ENCODE measurements at regions of chr10 and their contacts with region 1.

Region 1: GRCh38 chr10:8946451-8946850 is 892.0 kb downstream of the GATA3 start:
- DNase-seq: no peak
- H3K4me3 Mint-ChIP-seq: no peak overlapping the region
- H3K27ac Mint-ChIP-seq: no peak overlapping the region
- H3K4me1 Mint-ChIP-seq: no peaks in the 10 kb centered on the region
- H3K27me3 Mint-ChIP-seq: no peaks in the 10 kb centered on the region
- CTCF ChIP-seq: no peak

Region 2: DNA sequence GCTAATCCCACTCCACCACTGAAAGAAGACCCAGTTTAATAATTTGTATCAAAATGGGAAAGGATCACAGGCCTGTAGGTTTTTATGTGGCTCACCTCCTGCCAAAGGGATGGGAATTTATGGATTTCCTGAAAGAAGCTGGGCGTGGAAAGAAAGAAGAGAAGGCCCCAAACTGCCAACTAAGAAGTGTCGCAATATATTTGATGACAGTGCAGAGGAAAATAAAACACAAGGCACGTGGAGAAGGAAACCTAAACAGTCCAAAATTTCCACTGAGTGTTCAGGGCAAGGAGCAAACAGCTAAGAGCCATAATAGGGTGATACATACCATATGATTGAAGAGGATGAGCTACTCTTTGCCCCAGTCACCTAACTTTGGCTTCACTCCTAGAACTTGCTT is 224.8 kb before region 1 on chr10:
- CTCF ChIA-PET with region 1: no interaction called
- POLR2A ChIA-PET with region 1: no interaction called
- intact Hi-C with region 1: no loop called
- DNase-seq: peak; percentile 71
- H3K4me3 Mint-ChIP-seq: no peak overlapping the region
- H3K27ac Mint-ChIP-seq: peak overlapping the region; percentile 78
- H3K4me1 Mint-ChIP-seq: peaks cover 12% of the 10 kb centered on the region
- H3K27me3 Mint-ChIP-seq: no peaks in the 10 kb centered on the region
- CTCF ChIP-seq: no peak

Region 3: DNA sequence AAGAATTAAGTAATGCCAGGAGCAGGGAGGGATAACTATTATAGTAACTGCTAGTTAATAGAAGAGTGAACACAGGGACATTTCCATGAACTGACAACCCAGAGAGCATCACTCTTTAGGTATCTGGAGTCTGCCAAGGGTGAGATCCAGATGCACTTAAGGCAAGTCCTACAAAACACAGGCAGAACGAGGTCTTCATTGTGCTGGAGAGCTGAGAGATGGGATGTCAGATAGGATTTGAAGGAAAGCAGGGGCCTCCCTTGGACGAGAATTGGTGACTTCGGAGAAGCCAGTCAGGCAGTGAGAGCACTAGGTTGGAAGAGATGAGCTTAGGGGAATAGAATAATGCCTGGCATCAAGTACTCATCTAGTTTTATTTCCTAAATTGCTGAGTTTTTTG is 207.5 kb before region 1 on chr10:
- CTCF ChIA-PET with region 1: no interaction called
- POLR2A ChIA-PET with region 1: no interaction called
- intact Hi-C with region 1: no loop called
- DNase-seq: no peak
- H3K4me3 Mint-ChIP-seq: no peak overlapping the region
- H3K27ac Mint-ChIP-seq: no peak overlapping the region
- H3K4me1 Mint-ChIP-seq: no peaks in the 10 kb centered on the region
- H3K27me3 Mint-ChIP-seq: no peaks in the 10 kb centered on the region
- CTCF ChIP-seq: no peak

Region 4: GRCh38 chr10:8985651-8986050 is 39.2 kb after region 1 on chr10:
- CTCF ChIA-PET with region 1: no interaction called
- POLR2A ChIA-PET with region 1: no interaction called
- intact Hi-C with region 1: loop called (anchors 1 kb)
- DNase-seq: no peak
- H3K4me3 Mint-ChIP-seq: no peak overlapping the region
- H3K27ac Mint-ChIP-seq: no peak overlapping the region
- H3K4me1 Mint-ChIP-seq: no peaks in the 10 kb centered on the region
- H3K27me3 Mint-ChIP-seq: no peaks in the 10 kb centered on the region
- CTCF ChIP-seq: no peak

Region 5: DNA sequence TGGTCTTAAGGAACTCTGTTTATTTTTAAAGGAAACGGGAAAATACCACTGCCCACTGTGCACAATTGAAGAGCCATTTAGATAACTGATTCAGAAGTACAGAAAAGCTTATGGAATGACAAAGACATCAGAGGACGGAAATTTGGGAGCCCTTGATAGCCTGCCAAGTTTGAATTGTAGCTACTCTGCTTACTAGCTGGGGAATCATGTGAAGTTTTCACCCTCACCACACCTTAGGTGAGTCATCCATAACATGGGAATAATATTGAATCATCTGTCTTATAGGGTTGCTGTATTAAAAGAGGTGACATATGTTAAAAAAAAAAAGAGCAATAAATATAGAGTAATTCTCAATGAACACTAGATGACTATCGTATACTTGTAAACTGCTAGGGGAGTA is 212.2 kb after region 1 on chr10:
- CTCF ChIA-PET with region 1: no interaction called
- POLR2A ChIA-PET with region 1: no interaction called
- intact Hi-C with region 1: no loop called
- DNase-seq: peak; percentile 74
- H3K4me3 Mint-ChIP-seq: no peak overlapping the region
- H3K27ac Mint-ChIP-seq: peak overlapping the region; percentile 61
- H3K4me1 Mint-ChIP-seq: peaks cover 12% of the 10 kb centered on the region
- H3K27me3 Mint-ChIP-seq: no peaks in the 10 kb centered on the region
- CTCF ChIP-seq: no peak

Measured in MCF 10A (cell line).